Sciatic nerve (tissue), 2 donors: ENCODE measurements at regions of chr6 and their contacts with region 1.

Region 1: DNA sequence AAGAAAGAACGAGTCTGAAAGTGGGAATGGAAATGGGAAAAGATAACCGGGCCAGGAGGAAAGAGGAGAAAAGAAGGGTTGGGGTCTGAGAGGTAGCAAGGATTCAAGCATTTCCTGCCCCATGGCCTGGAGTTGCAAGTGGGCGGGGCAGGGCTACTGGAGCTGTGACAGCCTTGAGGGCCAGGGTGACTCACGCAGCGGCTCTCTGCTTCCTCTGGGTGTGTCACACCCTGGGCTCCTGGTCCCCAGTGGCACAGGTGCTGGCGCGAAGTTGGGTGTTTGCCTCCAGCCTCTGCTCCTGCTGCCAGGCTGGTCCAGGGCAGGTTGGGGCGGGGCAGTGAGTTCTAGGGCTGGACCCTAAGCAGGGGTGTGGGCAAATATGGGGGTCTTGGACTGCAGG is 3.3 kb upstream of the ULBP3 start:
- DNase-seq: no peak
- ATAC-seq: no peak

Region 2: DNA sequence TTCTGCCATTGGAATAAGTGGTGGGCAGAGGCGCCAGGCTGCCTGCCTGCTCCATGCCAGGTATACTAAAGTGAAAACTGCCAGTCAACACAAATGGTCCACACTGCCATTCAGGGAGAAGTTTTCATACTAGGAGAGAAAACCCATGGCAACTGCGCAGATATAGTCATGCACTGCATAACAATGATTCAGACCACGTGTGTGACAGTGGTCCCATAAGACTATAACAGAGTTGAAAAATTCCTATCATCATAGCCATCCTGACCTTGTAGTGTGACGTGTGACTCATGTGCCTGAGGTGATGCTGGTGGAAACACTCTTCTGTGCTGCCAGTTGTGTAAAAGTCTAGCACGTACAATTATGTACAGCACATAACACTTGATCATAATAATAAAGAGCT is 612.4 kb before region 1 on chr6:
- intact Hi-C with region 1: no loop called
- DNase-seq: no peak
- ATAC-seq: no peak

Region 3: DNA sequence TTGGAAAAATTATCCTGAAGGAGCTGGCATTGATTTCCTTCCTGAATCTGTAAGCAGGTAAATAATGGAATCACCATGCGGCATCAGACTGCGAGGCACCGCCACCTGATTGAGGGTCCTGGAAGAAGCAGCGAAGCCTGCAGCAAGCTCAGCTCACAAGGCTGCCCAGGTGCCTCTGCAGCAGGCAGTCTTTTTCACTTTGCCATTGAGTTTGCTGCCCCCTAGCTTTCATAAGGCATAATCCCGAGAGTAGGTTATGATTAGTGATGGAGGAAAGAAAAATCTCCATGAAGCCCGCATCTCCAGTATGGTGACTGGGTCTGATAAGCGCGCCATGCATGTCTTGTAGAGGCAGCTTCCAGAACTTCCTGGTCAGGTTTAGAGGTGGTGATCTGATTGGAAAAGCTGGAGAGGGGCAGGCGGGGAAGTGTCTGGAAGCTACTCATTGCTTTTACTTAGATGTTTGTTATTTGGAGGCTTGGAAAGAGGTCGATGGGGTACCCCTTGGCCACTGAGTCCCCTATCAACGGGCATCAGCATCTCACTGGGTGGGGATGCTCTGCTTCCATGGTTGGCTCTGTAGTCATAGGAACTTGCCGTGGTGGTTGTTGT is 323.3 kb after region 1 on chr6:
- intact Hi-C with region 1: loop called (anchors 10 kb)
- DNase-seq: no peak
- ATAC-seq: peak; percentile 79

Region 4: DNA sequence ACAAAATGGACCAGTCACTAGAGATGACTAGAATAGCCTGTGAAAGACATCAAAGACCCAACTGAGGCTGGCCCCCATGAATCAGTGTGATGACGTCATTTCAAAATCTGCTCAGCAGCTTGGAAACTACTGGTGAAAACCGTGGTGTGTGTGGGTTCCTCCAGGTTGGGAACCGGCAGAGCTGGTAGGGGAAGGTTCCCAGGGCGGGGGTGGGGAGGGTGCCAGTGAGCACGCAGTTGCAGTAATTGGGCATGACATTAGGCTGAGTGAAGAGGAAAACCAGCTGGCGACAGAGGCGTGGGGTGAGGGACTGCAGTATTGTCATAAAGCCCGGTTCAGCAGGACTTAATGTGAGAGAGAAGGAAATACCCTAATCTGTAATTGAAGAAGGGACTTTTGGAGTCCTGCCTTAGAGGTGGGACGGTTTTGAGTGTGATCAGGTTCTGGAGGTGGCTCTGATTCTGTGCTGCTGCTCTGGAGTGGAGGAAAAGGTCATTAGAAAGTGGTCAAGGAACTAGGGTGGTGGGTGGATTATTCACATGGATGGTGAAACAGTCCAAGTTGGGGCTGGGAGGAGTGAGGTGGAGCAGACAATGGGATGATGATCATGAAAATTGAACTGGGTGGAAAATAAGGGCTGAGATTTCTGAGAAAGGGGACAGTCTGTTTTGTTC is 741.3 kb after region 1 on chr6:
- intact Hi-C with region 1: loop called (anchors 10 kb)
- DNase-seq: no peak
- ATAC-seq: peak; percentile 6